Naive thymus-derived CD4-positive, alpha-beta T cell (primary cell): ENCODE measurements at regions of chr2 and their contacts with region 1.

Region 1: GRCh38 chr2:196068271-196069209 is at the start of gene DNAH7:
- DNase-seq: peak; percentile 84 to 94 (median 92)
- ATAC-seq: peak; percentile 96
- H3K4me3 ChIP-seq: peak within 1 kb of the TSS; percentile 69
- H3K4me3 Mint-ChIP-seq: peak within 1 kb of the TSS; percentile 77 to 92 (median 88)
- H3K27ac ChIP-seq: peak within 1 kb of the TSS; percentile 45
- H3K27ac Mint-ChIP-seq: peak within 1 kb of the TSS; percentile 75 to 94 (median 86)
- H3K4me1 ChIP-seq: peaks cover 6% of the 10 kb centered on the region in 2 donors
- H3K4me1 Mint-ChIP-seq: peaks cover 6 to 16% (median 12%) of the 10 kb centered on the region in 7 donors
- H3K27me3 ChIP-seq: peaks cover 0 to 3% of the 10 kb centered on the region in 2 donors
- H3K27me3 Mint-ChIP-seq: peaks cover 0 to 33% (median 3%) of the 10 kb centered on the region in 5 donors
- total RNA-seq, gene DNAH7: not detected

Region 2: GRCh38 chr2:194545978-194546377 is 1522.6 kb before region 1 on chr2:
- CTCF ChIA-PET with region 1: no interaction called
- POLR2A ChIA-PET with region 1: no interaction called
- intact Hi-C with region 1: loop called (anchors 1 kb)
- DNase-seq: no peak
- ATAC-seq: no peak
- H3K4me3 ChIP-seq: no peak overlapping the region
- H3K4me3 Mint-ChIP-seq: no peak overlapping the region
- H3K27ac ChIP-seq: no peak overlapping the region
- H3K27ac Mint-ChIP-seq: no peak overlapping the region
- H3K4me1 ChIP-seq: no peaks in the 10 kb centered on the region
- H3K4me1 Mint-ChIP-seq: no peaks in the 10 kb centered on the region
- H3K27me3 ChIP-seq: no peaks in the 10 kb centered on the region
- H3K27me3 Mint-ChIP-seq: peaks cover 0 to 8% (median 0%) of the 10 kb centered on the region in 5 donors

Region 3: GRCh38 chr2:195486987-195487644 is 581.4 kb before region 1 on chr2:
- CTCF ChIA-PET with region 1: no interaction called
- POLR2A ChIA-PET with region 1: no interaction called
- intact Hi-C with region 1: no loop called
- DNase-seq: no peak
- ATAC-seq: peak; percentile 41
- H3K4me3 ChIP-seq: no peak overlapping the region
- H3K4me3 Mint-ChIP-seq: peak overlapping the region in 5 of 10 donors; percentile 3 to 74 (median 28)
- H3K27ac ChIP-seq: no peak overlapping the region
- H3K27ac Mint-ChIP-seq: peak overlapping the region in 2 of 9 donors; percentile 21 to 79
- H3K4me1 ChIP-seq: peaks cover 0 to 6% of the 10 kb centered on the region in 2 donors
- H3K4me1 Mint-ChIP-seq: peaks cover 0 to 43% (median 21%) of the 10 kb centered on the region in 7 donors
- H3K27me3 ChIP-seq: no peaks in the 10 kb centered on the region
- H3K27me3 Mint-ChIP-seq: no peaks in the 10 kb centered on the region

Region 4: GRCh38 chr2:195498176-195498575 is 570.4 kb before region 1 on chr2:
- CTCF ChIA-PET with region 1: interaction called, 3 read pairs
- POLR2A ChIA-PET with region 1: no interaction called
- intact Hi-C with region 1: loop called in 1 of 2 experiments (anchors 1 kb)
- DNase-seq: peak in 7 of 9 donors; percentile 25 to 60 (median 47)
- ATAC-seq: peak; percentile 68
- H3K4me3 ChIP-seq: no peak overlapping the region
- H3K4me3 Mint-ChIP-seq: peak overlapping the region in 4 of 10 donors; percentile 20 to 60 (median 32)
- H3K27ac ChIP-seq: no peak overlapping the region
- H3K27ac Mint-ChIP-seq: peak overlapping the region in 7 of 9 donors; percentile 14 to 88 (median 63)
- H3K4me1 ChIP-seq: peaks cover 0 to 19% of the 10 kb centered on the region in 2 donors
- H3K4me1 Mint-ChIP-seq: peaks cover 12 to 81% (median 54%) of the 10 kb centered on the region in 7 donors
- H3K27me3 ChIP-seq: no peaks in the 10 kb centered on the region
- H3K27me3 Mint-ChIP-seq: no peaks in the 10 kb centered on the region

Region 5: GRCh38 chr2:195575879-195576401 is 492.6 kb before region 1 on chr2:
- CTCF ChIA-PET with region 1: interaction called, 4 read pairs
- POLR2A ChIA-PET with region 1: interaction called, 3 read pairs
- intact Hi-C with region 1: loop called in 1 of 2 experiments (anchors 1 kb)
- DNase-seq: peak in 1 of 9 donors; percentile 20
- ATAC-seq: peak; percentile 49
- H3K4me3 ChIP-seq: no peak overlapping the region
- H3K4me3 Mint-ChIP-seq: peak overlapping the region; percentile 14 to 79 (median 63)
- H3K27ac ChIP-seq: peak overlapping the region; percentile 21
- H3K27ac Mint-ChIP-seq: peak overlapping the region; percentile 27 to 94 (median 85)
- H3K4me1 ChIP-seq: peaks cover 15 to 51% of the 10 kb centered on the region in 2 donors
- H3K4me1 Mint-ChIP-seq: peaks cover 38 to 91% (median 82%) of the 10 kb centered on the region in 7 donors
- H3K27me3 ChIP-seq: no peaks in the 10 kb centered on the region
- H3K27me3 Mint-ChIP-seq: no peaks in the 10 kb centered on the region

Region 6: GRCh38 chr2:196225213-196225612 is 156.7 kb after region 1 on chr2:
- CTCF ChIA-PET with region 1: no interaction called
- POLR2A ChIA-PET with region 1: no interaction called
- intact Hi-C with region 1: loop called in 1 of 2 experiments (anchors 2 kb)
- DNase-seq: no peak
- ATAC-seq: no peak
- H3K4me3 ChIP-seq: no peak overlapping the region
- H3K4me3 Mint-ChIP-seq: peak overlapping the region in 3 of 10 donors; percentile 17 to 37 (median 17)
- H3K27ac ChIP-seq: no peak overlapping the region
- H3K27ac Mint-ChIP-seq: peak overlapping the region in 7 of 9 donors; percentile 14 to 97 (median 50)
- H3K4me1 ChIP-seq: peaks cover 13 to 70% of the 10 kb centered on the region in 2 donors
- H3K4me1 Mint-ChIP-seq: peaks cover 48 to 88% (median 85%) of the 10 kb centered on the region in 7 donors
- H3K27me3 ChIP-seq: no peaks in the 10 kb centered on the region
- H3K27me3 Mint-ChIP-seq: no peaks in the 10 kb centered on the region

Region 7: GRCh38 chr2:196453613-196454047 is 385.1 kb after region 1 on chr2:
- CTCF ChIA-PET with region 1: interaction called, 3 read pairs
- POLR2A ChIA-PET with region 1: no interaction called
- intact Hi-C with region 1: loop called in 1 of 2 experiments (anchors 2 kb)
- DNase-seq: peak in 7 of 9 donors; percentile 2 to 39 (median 19)
- ATAC-seq: peak; percentile 60
- H3K4me3 ChIP-seq: no peak overlapping the region
- H3K4me3 Mint-ChIP-seq: no peak overlapping the region
- H3K27ac ChIP-seq: no peak overlapping the region
- H3K27ac Mint-ChIP-seq: no peak overlapping the region
- H3K4me1 ChIP-seq: no peaks in the 10 kb centered on the region
- H3K4me1 Mint-ChIP-seq: peaks cover 0 to 6% (median 0%) of the 10 kb centered on the region in 7 donors
- H3K27me3 ChIP-seq: peaks cover 0 to 6% of the 10 kb centered on the region in 2 donors
- H3K27me3 Mint-ChIP-seq: peaks cover 25 to 42% (median 31%) of the 10 kb centered on the region in 5 donors